Dendritic cell treated with granulocyte-macrophage colony-stimulating factor and Interleukin-4, amounts not matched to agents 40 ng/mL and 50 ng/mL, for 4 days (primary cell): ENCODE measurements at regions of chr1 and their contacts with region 1.

Region 1: GRCh38 chr1:110630839-110631663 is 24.9 kb upstream of the KCNA2 start:
- H3K4me3 Mint-ChIP-seq: no peak overlapping the region
- H3K27ac Mint-ChIP-seq: no peak overlapping the region
- H3K4me1 Mint-ChIP-seq: peaks cover 61% of the 10 kb centered on the region
- H3K27me3 Mint-ChIP-seq: no peaks in the 10 kb centered on the region

Region 2: GRCh38 chr1:110487726-110488125 is 143.3 kb before region 1 on chr1:
- intact Hi-C with region 1: no loop called
- H3K4me3 Mint-ChIP-seq: no peak overlapping the region
- H3K27ac Mint-ChIP-seq: no peak overlapping the region
- H3K4me1 Mint-ChIP-seq: peaks cover 16% of the 10 kb centered on the region
- H3K27me3 Mint-ChIP-seq: peaks cover 17% of the 10 kb centered on the region

Region 3: GRCh38 chr1:110672001-110672752 is 41.1 kb after region 1 on chr1:
- intact Hi-C with region 1: loop called (anchors 2 kb)
- H3K4me3 Mint-ChIP-seq: peak overlapping the region; percentile 75
- H3K27ac Mint-ChIP-seq: peak overlapping the region; percentile 50
- H3K4me1 Mint-ChIP-seq: peaks cover 40% of the 10 kb centered on the region
- H3K27me3 Mint-ChIP-seq: peaks cover 22% of the 10 kb centered on the region

Region 4: GRCh38 chr1:110766025-110766647 is 135.1 kb after region 1 on chr1:
- intact Hi-C with region 1: loop called (anchors 1 kb)
- H3K4me3 Mint-ChIP-seq: no peak overlapping the region
- H3K27ac Mint-ChIP-seq: no peak overlapping the region
- H3K4me1 Mint-ChIP-seq: peaks cover 21% of the 10 kb centered on the region
- H3K27me3 Mint-ChIP-seq: peaks cover 7% of the 10 kb centered on the region

Region 5: GRCh38 chr1:110893908-110894490 is 262.9 kb after region 1 on chr1:
- intact Hi-C with region 1: no loop called
- H3K4me3 Mint-ChIP-seq: no peak overlapping the region
- H3K27ac Mint-ChIP-seq: no peak overlapping the region
- H3K4me1 Mint-ChIP-seq: peaks cover 56% of the 10 kb centered on the region
- H3K27me3 Mint-ChIP-seq: no peaks in the 10 kb centered on the region